Dorsolateral prefrontal cortex (tissue), 120 donors: ENCODE measurements at regions of chr21 and their contacts with region 1.

Region 1: GRCh38 chr21:45820171-45821091 is 161.1 kb upstream of the COL6A1 start:
- DNase-seq: peak; percentile 66 to 92 (median 80)
- H3K4me3 ChIP-seq: no peak overlapping the region
- H3K27ac ChIP-seq: peak overlapping the region in 1 of 59 donors; percentile 36
- H3K27me3 ChIP-seq: no peaks in the 10 kb centered on the region
- CTCF ChIP-seq: peak; percentile 49 to 94 (median 86)

Region 2: GRCh38 chr21:45309069-45309986 is 511.1 kb before region 1 on chr21:
- intact Hi-C with region 1: loop called in 1 of 2 experiments (anchors 10 kb)
- DNase-seq: peak in 6 of 10 donors; percentile 33 to 62 (median 46)
- H3K4me3 ChIP-seq: no peak overlapping the region
- H3K27ac ChIP-seq: peak overlapping the region in 35 of 59 donors; percentile 9 to 75 (median 37)
- H3K27me3 ChIP-seq: peaks cover 0 to 4% (median 0%) of the 10 kb centered on the region in 45 donors
- CTCF ChIP-seq: peak in 55 of 56 donors; percentile 20 to 68 (median 51)

Region 3: DNA sequence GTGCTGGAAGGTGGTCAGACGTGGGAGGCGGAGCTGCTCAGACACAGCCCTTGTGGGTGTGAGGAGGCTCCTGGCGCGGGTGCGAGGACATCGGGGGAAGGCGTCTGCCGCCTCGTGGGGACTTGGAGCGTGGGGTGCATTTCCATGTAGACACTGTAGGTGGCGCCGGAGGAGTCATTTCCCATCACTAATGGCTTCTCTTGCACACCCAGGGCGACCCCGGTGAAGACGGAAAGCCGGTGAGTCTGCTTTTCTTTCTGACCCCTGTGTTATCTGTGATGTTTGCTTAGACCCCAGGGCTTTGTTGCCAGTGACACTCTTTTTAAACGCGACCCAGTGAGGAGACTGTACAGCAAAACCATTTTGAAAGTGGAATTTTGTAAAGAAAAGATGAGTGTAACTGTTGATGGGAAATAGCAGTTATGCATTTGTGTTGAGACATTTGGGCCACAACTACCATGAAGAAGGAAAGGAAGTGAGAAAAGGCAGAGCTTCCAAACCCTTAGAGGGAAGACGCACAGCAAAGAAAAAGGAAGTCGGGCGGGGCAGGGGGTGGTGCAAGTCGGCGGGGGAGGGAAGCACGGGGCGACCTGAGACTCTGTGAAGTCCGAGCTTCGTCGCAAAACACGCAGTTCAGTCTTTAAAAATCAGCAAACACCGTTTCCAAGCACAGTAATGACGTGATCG is 342.2 kb before region 1 on chr21:
- intact Hi-C with region 1: loop called in 1 of 2 experiments (anchors 5 kb)
- DNase-seq: peak in 9 of 10 donors; percentile 61 to 79 (median 74)
- H3K4me3 ChIP-seq: peak overlapping the region in 44 of 59 donors; percentile 4 to 56 (median 33)
- H3K27ac ChIP-seq: peak overlapping the region in 36 of 59 donors; percentile 2 to 73 (median 52)
- H3K27me3 ChIP-seq: no peaks in the 10 kb centered on the region
- CTCF ChIP-seq: peak; percentile 52 to 91 (median 82)

Region 4: DNA sequence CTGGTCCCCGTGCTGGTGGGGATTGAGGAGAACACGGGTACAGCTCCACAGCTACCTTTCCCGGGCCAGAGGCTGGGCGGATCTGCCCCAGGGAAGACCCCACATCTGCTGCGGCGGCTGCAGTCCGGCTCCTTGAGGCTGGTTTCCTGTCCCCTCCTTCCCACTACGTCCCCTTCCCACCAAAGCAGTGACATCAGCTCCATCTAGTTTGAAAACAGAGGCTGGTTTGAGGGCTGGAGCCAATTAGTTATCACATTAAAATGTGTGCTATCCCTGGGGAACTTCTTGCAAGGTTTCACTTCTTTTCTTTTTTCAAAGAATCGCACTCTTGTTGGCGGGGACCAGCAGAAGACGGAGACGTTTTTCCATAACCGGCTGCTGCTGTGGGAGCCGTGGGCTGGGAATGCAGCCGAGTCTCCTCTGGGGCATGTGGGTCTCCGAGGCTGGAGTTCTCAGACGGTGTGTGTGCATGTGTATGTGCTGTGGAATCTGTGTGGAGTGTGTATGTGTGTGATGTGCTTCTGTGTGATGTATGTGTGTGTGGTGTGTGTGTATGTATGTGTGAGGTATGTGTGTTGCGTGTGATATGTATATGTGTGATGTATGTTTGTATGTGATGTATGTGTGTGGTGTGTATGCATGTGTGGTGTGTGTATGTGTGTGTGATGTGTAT is 185.8 kb before region 1 on chr21:
- intact Hi-C with region 1: loop called in 1 of 2 experiments (anchors 10 kb)
- DNase-seq: no peak
- H3K4me3 ChIP-seq: peak overlapping the region in 3 of 59 donors; percentile 2 to 48 (median 4)
- H3K27ac ChIP-seq: no peak overlapping the region
- H3K27me3 ChIP-seq: peaks cover 0 to 5% (median 0%) of the 10 kb centered on the region in 45 donors
- CTCF ChIP-seq: no peak